Natural killer cell (primary cell): ENCODE measurements at regions of chr1 and their contacts with region 1.

Region 1: GRCh38 chr1:198157241-198157846 is 546 bp downstream of the NEK7 start:
- DNase-seq: peak; percentile 74 to 91
- ATAC-seq: peak; percentile 43 to 62 (median 58)
- H3K4me3 ChIP-seq: peak overlapping the region; percentile 73
- H3K4me3 Mint-ChIP-seq: peak overlapping the region; percentile 99
- H3K27ac ChIP-seq: peak overlapping the region; percentile 88
- H3K27ac Mint-ChIP-seq: peak overlapping the region; percentile 96 to 99
- H3K4me1 ChIP-seq: peaks cover 16% of the 10 kb centered on the region
- H3K4me1 Mint-ChIP-seq: peaks cover 39 to 53% of the 10 kb centered on the region in 2 donors
- H3K27me3 ChIP-seq: no peaks in the 10 kb centered on the region
- H3K27me3 Mint-ChIP-seq: no peaks in the 10 kb centered on the region
- CTCF ChIP-seq: no peak

Region 2: DNA sequence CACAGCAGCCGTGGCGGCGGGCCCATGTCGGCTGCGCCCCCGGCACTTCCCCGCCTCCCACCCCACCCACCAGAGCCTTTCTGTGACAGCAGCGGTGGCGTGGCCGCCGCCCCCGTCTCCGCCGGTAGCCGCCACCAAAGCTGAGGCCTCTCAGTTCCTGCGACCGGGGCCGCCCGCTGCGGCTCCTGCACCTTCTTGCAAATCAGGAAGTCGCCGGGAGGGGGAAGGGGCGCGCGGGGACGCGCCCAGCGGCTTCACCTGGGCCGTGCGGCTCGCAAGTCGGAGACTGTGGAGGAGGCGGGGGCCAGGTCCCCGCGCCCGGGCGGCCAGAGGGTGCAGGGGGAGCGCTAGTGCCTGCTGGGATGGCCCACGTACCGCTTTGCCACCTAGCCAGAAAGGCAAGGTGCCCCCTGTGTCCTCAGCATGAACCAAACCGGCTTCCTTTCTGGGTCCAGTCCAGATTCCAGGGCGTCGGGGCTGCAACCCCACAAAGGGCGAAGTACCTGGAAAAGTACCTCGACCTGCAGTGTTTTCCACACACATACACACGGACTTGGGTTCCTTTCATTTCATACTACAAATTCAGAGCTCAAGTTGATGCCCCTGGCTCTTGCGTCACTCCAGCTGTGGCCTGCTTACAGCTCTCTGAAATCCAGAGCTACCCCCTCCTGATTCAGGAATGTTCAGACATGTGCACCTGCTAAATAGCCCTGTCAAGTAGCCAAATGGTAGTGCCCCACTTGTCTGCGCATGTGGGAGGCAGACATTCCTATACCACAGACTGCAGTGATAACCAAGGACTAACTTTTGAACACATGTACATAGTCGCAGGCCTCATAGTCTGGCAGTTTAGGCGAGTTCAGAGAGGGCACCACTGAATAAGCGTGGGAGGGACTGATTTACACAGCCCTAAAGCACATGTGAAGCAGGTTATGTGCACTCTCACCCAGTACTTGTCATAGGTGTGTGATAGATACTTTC is 381.8 kb before region 1 on chr1 and contains the start of gene DENND1B:
- intact Hi-C with region 1: loop called (anchors 5 kb)
- DNase-seq: peak; percentile 71 to 89
- ATAC-seq: peak; percentile 47 to 81 (median 77)
- H3K4me3 ChIP-seq: peak within 1 kb of the TSS; percentile 82
- H3K4me3 Mint-ChIP-seq: peak within 1 kb of the TSS; percentile 91
- H3K27ac ChIP-seq: peak within 1 kb of the TSS; percentile 97
- H3K27ac Mint-ChIP-seq: peak within 1 kb of the TSS; percentile 89 to 99
- H3K4me1 ChIP-seq: peaks cover 16% of the 10 kb centered on the region
- H3K4me1 Mint-ChIP-seq: peaks cover 59 to 61% of the 10 kb centered on the region in 2 donors
- H3K27me3 ChIP-seq: no peaks in the 10 kb centered on the region
- H3K27me3 Mint-ChIP-seq: no peaks in the 10 kb centered on the region
- CTCF ChIP-seq: no peak
- total RNA-seq, gene DENND1B: 35.4 to 62.5 (median 37.5) TPM

Region 3: DNA sequence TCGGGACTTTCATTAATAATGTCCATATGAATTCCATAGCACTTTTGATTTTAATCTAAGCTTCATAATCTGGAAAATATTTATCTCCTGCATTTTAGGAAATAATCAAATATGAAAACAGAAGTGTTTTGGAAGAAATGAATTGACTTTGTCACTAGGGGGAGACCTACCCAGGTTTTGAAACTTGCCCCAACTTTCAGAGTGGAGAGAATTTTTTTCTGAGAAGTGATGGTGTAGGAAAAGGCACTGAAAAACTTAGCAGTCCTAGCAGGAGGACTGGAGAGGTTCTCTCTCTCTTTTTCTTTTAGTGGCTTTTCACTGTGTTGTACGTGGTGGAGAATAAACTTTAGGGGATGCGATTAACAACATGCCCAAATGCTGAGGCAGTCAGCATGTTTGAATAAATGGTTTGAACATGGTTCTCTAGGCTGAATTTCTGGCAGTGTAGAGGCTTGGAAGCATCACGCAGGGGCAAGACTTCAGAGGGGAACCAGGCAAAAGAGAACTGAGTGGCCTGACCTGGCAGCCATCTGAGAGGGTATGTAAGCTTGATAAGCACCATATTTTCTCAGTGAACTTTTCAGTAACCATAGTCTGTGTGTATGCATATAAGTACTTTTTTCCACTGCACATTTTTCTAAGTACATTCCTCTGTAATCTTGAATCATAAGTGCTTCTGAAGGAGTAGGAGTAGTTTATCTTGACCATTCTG is 68.8 kb before region 1 on chr1:
- intact Hi-C with region 1: loop called (anchors 1 kb)
- DNase-seq: peak in 1 of 2 donors; percentile 68
- ATAC-seq: peak in 2 of 3 donors; percentile 53 to 65
- H3K4me3 ChIP-seq: no peak overlapping the region
- H3K4me3 Mint-ChIP-seq: no peak overlapping the region
- H3K27ac ChIP-seq: no peak overlapping the region
- H3K27ac Mint-ChIP-seq: no peak overlapping the region
- H3K4me1 ChIP-seq: no peaks in the 10 kb centered on the region
- H3K4me1 Mint-ChIP-seq: peaks cover 5% of the 10 kb centered on the region in 2 donors
- H3K27me3 ChIP-seq: no peaks in the 10 kb centered on the region
- H3K27me3 Mint-ChIP-seq: peaks cover 2 to 6% of the 10 kb centered on the region in 2 donors
- CTCF ChIP-seq: peak; percentile 87

Region 4: GRCh38 chr1:198167436-198167934 is 10.1 kb after region 1 on chr1:
- intact Hi-C with region 1: loop called (anchors 1 kb)
- DNase-seq: peak; percentile 37 to 80
- ATAC-seq: peak; percentile 79 to 92 (median 91)
- H3K4me3 ChIP-seq: no peak overlapping the region
- H3K4me3 Mint-ChIP-seq: peak overlapping the region; percentile 88
- H3K27ac ChIP-seq: peak overlapping the region; percentile 81
- H3K27ac Mint-ChIP-seq: peak overlapping the region; percentile 94 to 96
- H3K4me1 ChIP-seq: peaks cover 50% of the 10 kb centered on the region
- H3K4me1 Mint-ChIP-seq: peaks cover 72% of the 10 kb centered on the region in 2 donors
- H3K27me3 ChIP-seq: no peaks in the 10 kb centered on the region
- H3K27me3 Mint-ChIP-seq: no peaks in the 10 kb centered on the region
- CTCF ChIP-seq: no peak

Region 5: DNA sequence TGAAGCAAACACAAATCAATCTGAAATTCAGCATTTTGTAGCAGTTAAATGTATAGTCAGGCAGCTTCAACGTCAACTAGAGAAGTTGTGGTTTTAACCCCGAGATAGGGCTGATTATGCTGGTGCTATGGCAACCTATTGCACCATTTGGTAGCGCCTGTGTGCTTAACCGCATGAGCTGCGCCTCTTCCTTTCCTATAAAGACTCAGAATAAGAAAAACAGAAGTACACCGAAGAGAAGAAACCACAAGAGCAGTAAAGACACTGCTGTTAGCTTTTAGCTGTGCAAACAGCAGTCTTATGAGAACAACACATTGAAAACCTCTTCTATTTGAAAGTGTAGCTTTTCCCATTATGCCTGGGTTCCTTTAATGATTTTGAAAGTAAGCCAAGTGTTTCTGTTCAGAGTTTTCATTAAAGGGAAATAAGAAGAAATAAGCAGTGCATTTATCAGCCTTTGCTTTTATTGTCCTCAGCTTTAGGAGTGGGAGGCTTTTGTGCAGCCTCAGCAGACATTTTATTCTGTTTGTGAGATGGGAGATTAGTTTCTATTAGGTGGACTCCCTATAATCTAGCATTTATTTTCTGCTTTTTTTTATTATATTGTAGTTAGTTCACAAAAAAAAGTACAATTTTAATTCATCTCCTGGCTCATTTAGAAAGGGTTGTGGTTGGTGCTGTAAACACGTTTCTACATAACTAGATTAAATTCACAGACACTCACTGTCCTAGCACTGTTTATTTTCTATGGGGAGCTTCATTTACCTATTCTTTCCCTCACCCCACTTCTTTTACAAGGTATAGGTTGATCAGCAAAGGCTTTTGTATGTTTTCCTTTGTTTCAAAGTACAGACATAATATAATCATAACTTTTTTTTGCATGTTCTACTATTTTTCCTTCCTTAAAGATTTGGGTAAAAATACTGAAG is 524.8 kb after region 1 on chr1:
- intact Hi-C with region 1: loop called (anchors 2 kb)
- DNase-seq: peak; percentile 63 to 96
- ATAC-seq: peak; percentile 66 to 93 (median 86)
- H3K4me3 ChIP-seq: peak overlapping the region; percentile 21
- H3K4me3 Mint-ChIP-seq: peak overlapping the region; percentile 78
- H3K27ac ChIP-seq: peak overlapping the region; percentile 90
- H3K27ac Mint-ChIP-seq: peak overlapping the region; percentile 88 to 90
- H3K4me1 ChIP-seq: peaks cover 27% of the 10 kb centered on the region
- H3K4me1 Mint-ChIP-seq: peaks cover 82 to 83% of the 10 kb centered on the region in 2 donors
- H3K27me3 ChIP-seq: no peaks in the 10 kb centered on the region
- H3K27me3 Mint-ChIP-seq: no peaks in the 10 kb centered on the region
- CTCF ChIP-seq: no peak